Common myeloid progenitor, CD34-positive (primary cell): ENCODE measurements at regions of chr1 and their contacts with region 1.

Region 1: DNA sequence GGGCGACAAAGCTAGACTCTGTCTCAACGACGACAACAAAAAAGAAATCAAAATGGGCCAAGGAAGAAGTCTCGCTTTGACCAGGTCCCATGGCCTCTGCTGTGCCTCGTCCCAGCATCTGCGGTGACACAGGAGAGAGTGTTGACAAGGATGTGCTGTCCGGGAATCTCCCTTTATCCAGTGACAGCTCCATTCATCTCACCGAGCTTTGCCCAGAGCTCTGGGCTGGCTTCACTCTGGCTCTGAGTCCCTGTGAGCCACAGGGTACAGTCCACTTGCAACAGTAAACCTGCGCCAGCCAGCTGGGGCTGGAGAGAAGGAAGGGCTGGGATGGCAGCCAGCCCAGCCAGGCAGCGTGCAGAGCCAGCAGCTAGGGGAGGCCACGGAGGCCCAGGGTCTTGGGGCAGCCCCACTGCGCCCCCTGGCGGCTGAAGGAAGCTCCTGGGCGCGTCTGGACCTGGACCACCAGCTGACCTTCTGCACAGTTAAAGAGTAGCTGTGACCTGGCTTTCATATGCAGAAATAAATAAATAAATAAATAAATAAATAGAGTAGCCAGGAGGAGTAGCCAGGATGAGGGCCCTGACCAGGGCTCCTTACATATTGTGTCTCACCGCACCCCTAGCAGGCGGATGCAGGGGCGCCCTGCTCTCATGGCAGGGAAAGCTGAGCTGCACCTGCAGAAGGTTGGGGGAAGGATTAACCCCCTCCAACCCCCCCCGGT is 29.7 kb downstream of the ENO1 start:
- DNase-seq: peak; percentile 80 to 87 (median 87)
- H3K4me3 ChIP-seq: peak overlapping the region in 1 of 7 experiments; percentile 5
- H3K27ac ChIP-seq: no peak overlapping the region
- H3K4me1 ChIP-seq: peaks cover 0 to 39% (median 32%) of the 10 kb centered on the region in 4 experiments
- H3K27me3 ChIP-seq: no peaks in the 10 kb centered on the region

Region 2: GRCh38 chr1:8560611-8561544 is 287.9 kb before region 1 on chr1:
- CTCF ChIA-PET with region 1: interaction called, 28 read pairs
- POLR2A ChIA-PET with region 1: no interaction called
- DNase-seq: peak; percentile 58 to 73 (median 71)
- H3K4me3 ChIP-seq: no peak overlapping the region
- H3K27ac ChIP-seq: peak overlapping the region in 1 of 2 experiments; percentile 32
- H3K4me1 ChIP-seq: peaks cover 4 to 24% (median 7%) of the 10 kb centered on the region in 4 experiments
- H3K27me3 ChIP-seq: no peaks in the 10 kb centered on the region

Region 3: GRCh38 chr1:8671306-8671917 is 177.4 kb before region 1 on chr1:
- CTCF ChIA-PET with region 1: interaction called, 14 read pairs
- POLR2A ChIA-PET with region 1: interaction called, 3 read pairs
- DNase-seq: peak; percentile 78 to 82 (median 81)
- H3K4me3 ChIP-seq: no peak overlapping the region
- H3K27ac ChIP-seq: peak overlapping the region in 1 of 2 experiments; percentile 7
- H3K4me1 ChIP-seq: peaks cover 13 to 66% (median 35%) of the 10 kb centered on the region in 4 experiments
- H3K27me3 ChIP-seq: no peaks in the 10 kb centered on the region

Region 4: GRCh38 chr1:8727809-8728213 is 121.0 kb before region 1 on chr1:
- CTCF ChIA-PET with region 1: interaction called, 37 read pairs
- POLR2A ChIA-PET with region 1: no interaction called
- DNase-seq: no peak
- H3K4me3 ChIP-seq: no peak overlapping the region
- H3K27ac ChIP-seq: no peak overlapping the region
- H3K4me1 ChIP-seq: peaks cover 0 to 16% (median 3%) of the 10 kb centered on the region in 4 experiments
- H3K27me3 ChIP-seq: no peaks in the 10 kb centered on the region

Region 5: GRCh38 chr1:8817406-8818324 is 31.2 kb before region 1 on chr1 and contains the start of gene RERE:
- CTCF ChIA-PET with region 1: interaction called, 40 read pairs
- POLR2A ChIA-PET with region 1: interaction called, 8 read pairs
- DNase-seq: peak; percentile 95 to 97 (median 97)
- H3K4me3 ChIP-seq: peak within 1 kb of the TSS; percentile 85 to 95 (median 91)
- H3K27ac ChIP-seq: peak within 1 kb of the TSS; percentile 92 to 95
- H3K4me1 ChIP-seq: peaks cover 39 to 74% (median 44%) of the 10 kb centered on the region in 4 experiments
- H3K27me3 ChIP-seq: no peaks in the 10 kb centered on the region

Region 6: DNA sequence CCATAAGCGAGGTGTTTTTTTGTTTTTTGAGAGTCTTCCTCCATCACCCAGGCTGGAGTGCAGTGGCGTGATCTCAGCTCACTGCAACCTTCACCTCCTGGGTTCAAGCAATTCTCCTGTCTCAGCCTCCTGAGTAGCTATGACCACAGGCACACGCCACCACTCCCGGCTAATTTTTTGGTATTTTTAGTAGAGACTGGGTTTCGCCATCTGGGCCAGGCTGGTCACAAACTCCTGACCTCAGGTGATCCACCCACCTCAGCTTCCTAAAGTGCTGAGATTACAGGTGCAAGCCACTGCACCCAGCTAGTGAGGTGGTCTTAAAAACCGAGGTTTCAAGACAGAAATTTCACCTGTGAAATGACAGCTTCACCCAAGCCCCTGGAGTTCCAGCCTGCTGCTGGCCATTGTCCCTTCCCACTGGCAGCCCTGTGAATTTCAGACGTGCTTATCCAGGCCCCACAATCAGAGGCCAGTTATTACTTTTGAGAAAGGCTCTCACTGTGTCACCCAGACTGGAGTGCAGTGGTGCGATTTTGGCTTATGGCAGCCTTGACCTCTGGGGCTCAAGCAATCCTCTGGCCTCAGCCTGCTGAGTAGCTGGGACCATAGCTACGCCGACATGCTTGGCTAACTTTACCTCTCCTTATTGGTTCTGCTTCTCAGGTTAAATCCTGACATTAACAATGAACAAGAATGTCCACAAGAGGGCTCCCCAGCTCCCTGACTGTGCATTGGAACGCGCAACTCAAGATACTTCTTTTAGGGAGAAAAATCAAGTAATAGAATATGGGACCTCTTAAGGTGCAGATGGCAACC is 10.3 kb after region 1 on chr1:
- CTCF ChIA-PET with region 1: interaction called, 67 read pairs
- POLR2A ChIA-PET with region 1: interaction called, 6 read pairs
- DNase-seq: peak; percentile 82 to 87 (median 83)
- H3K4me3 ChIP-seq: peak overlapping the region in 1 of 7 experiments; percentile 16
- H3K27ac ChIP-seq: peak overlapping the region; percentile 53 to 81
- H3K4me1 ChIP-seq: peaks cover 12 to 80% (median 70%) of the 10 kb centered on the region in 4 experiments
- H3K27me3 ChIP-seq: no peaks in the 10 kb centered on the region